GM12878 (cell line): ENCODE measurements at regions of chr11 and their contacts with region 1.

Region 1: GRCh38 chr11:119108146-119108856 is 1.2 kb downstream of the C2CD2L start:
- DNase-seq: no peak
- ATAC-seq: peak; percentile 44
- H3K4me3 ChIP-seq: peak overlapping the region; percentile 96
- H3K27ac ChIP-seq: peak overlapping the region; percentile 58
- H3K4me1 ChIP-seq: peaks cover 19% of the 10 kb centered on the region
- H3K27me3 ChIP-seq: no peaks in the 10 kb centered on the region
- CTCF ChIP-seq: no peak
- EP300 ChIP-seq: no peak
- POLR2A ChIP-seq: no peak
- RAD21 ChIP-seq: no peak

Region 2: GRCh38 chr11:119084663-119085436 is 23.5 kb before region 1 on chr11 and contains the start of gene HMBS:
- CTCF ChIA-PET with region 1: interaction called, 9 read pairs
- POLR2A ChIA-PET with region 1: interaction called, 25 read pairs
- RAD21 ChIA-PET with region 1: interaction called, 11 read pairs
- SMC1A ChIA-PET with region 1: interaction called, 7 read pairs
- in situ Hi-C with region 1: no loop called
- intact Hi-C with region 1: no loop called
- DNase-seq: peak; percentile 79
- ATAC-seq: peak; percentile 95
- H3K4me3 ChIP-seq: peak within 1 kb of the TSS; percentile 97
- H3K27ac ChIP-seq: peak within 1 kb of the TSS; percentile 94
- H3K4me1 ChIP-seq: peaks cover 10% of the 10 kb centered on the region
- H3K27me3 ChIP-seq: no peaks in the 10 kb centered on the region
- CTCF ChIP-seq: no peak
- EP300 ChIP-seq: peak in 1 of 2 experiments; percentile 12; a peak in 1 of 4 replicates
- POLR2A ChIP-seq: peak; percentile 89
- RAD21 ChIP-seq: no peak
- polyA plus RNA-seq, gene HMBS: 17.7 to 27.6 TPM

Region 3: DNA sequence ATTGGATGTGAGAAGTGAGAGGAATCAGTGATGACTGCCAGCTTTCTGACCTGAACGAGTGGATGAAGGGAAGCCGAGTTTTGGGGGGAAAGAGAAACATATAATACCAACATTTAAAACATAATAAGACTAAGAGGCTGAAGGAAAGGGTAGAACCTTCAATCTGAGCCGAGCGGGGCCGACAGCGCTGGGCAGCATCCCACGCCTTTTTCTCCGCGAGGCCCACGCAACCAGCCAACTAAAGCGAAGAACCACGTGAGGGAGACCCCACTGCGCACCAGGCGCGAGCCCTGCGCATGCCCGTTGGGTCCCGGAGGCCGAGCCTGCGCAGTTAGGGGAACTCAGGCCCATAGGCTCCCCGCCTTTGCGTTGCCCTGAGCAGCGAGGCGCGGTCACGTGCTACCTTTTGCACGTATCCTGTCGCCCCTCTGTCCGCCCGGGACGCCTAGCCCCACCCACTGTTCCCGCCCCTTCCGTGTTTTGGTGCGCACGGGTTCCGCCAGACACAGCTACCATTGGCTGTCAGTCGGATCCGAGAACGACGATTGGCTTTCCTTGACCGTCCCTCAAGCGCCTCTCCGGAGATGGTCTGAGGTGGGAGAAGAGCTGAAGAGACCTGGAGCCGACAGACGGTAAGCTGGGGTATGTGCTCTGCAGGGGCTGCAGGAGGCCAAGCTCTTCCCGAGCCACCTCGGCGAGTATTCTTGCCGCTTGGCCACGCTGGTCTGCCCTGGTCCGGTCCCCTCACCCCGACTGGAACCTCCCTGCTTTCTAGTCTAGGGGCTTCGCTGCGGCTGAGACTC is 12.9 kb after region 1 on chr11 and contains the start of gene HINFP:
- CTCF ChIA-PET with region 1: interaction called, 9 read pairs
- POLR2A ChIA-PET with region 1: interaction called, 76 read pairs
- RAD21 ChIA-PET with region 1: interaction called, 16 read pairs
- SMC1A ChIA-PET with region 1: interaction called, 32 read pairs
- in situ Hi-C with region 1: no loop called
- intact Hi-C with region 1: no loop called
- DNase-seq: peak; percentile 99
- ATAC-seq: peak; percentile 99
- H3K4me3 ChIP-seq: peak within 1 kb of the TSS; percentile 92
- H3K27ac ChIP-seq: peak within 1 kb of the TSS; percentile 65
- H3K4me1 ChIP-seq: peaks cover 13% of the 10 kb centered on the region
- H3K27me3 ChIP-seq: no peaks in the 10 kb centered on the region
- CTCF ChIP-seq: no peak
- EP300 ChIP-seq: no peak
- POLR2A ChIP-seq: peak; percentile 83
- RAD21 ChIP-seq: no peak
- polyA plus RNA-seq, gene HINFP: 13.1 to 18.9 TPM